Aorta (tissue), 5 donors: ENCODE measurements at regions of chr17 and their contacts with region 1.

Region 1: GRCh38 chr17:77887464-77888241 is 70.8 kb upstream of the TNRC6C start:
- DNase-seq: peak; percentile 94 to 97
- ATAC-seq: peak; percentile 94
- H3K4me3 ChIP-seq: peak overlapping the region; percentile 32 to 37
- H3K27ac ChIP-seq: peak overlapping the region in 1 of 2 donors; percentile 64
- H3K4me1 ChIP-seq: no peaks in the 10 kb centered on the region
- H3K27me3 ChIP-seq: no peaks in the 10 kb centered on the region

Region 2: GRCh38 chr17:77594416-77595209 is 293.0 kb before region 1 on chr17:
- intact Hi-C with region 1: loop called in 1 of 2 experiments (anchors 5 kb)
- DNase-seq: peak; percentile 14 to 52
- ATAC-seq: no peak
- H3K4me3 ChIP-seq: no peak overlapping the region
- H3K27ac ChIP-seq: no peak overlapping the region
- H3K4me1 ChIP-seq: no peaks in the 10 kb centered on the region
- H3K27me3 ChIP-seq: no peaks in the 10 kb centered on the region

Region 3: DNA sequence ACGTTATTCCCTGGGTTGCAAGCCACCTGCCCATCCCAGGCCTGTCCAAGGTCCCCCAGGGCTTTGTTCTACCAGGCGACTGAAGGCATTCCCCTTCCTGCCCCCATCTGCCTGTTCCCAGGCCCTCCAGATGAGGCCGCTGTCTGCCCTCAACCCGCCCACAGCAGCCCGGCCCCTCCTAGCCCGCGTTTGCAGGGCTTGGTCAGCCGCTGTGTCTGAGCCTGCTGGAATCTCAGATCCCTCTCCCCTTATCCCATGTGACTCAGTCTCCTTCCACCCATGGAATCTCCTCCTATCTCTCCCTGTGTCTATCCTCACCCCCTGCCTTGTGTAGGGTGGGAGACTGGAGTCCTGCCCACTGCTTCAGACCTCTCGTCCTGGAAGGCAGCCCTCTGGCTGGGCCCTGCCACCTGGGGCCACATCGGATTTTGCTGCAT is 115.2 kb before region 1 on chr17:
- intact Hi-C with region 1: loop called in 1 of 2 experiments (anchors 10 kb)
- DNase-seq: peak; percentile 72 to 83
- ATAC-seq: peak; percentile 75
- H3K4me3 ChIP-seq: no peak overlapping the region
- H3K27ac ChIP-seq: no peak overlapping the region
- H3K4me1 ChIP-seq: no peaks in the 10 kb centered on the region
- H3K27me3 ChIP-seq: no peaks in the 10 kb centered on the region